Activated naive CD4-positive, alpha-beta T cell treated with anti-CD3 and anti-CD28 coated beads for 36 hours (primary cell): ENCODE measurements at regions of chr2 and their contacts with region 1.

Region 1: DNA sequence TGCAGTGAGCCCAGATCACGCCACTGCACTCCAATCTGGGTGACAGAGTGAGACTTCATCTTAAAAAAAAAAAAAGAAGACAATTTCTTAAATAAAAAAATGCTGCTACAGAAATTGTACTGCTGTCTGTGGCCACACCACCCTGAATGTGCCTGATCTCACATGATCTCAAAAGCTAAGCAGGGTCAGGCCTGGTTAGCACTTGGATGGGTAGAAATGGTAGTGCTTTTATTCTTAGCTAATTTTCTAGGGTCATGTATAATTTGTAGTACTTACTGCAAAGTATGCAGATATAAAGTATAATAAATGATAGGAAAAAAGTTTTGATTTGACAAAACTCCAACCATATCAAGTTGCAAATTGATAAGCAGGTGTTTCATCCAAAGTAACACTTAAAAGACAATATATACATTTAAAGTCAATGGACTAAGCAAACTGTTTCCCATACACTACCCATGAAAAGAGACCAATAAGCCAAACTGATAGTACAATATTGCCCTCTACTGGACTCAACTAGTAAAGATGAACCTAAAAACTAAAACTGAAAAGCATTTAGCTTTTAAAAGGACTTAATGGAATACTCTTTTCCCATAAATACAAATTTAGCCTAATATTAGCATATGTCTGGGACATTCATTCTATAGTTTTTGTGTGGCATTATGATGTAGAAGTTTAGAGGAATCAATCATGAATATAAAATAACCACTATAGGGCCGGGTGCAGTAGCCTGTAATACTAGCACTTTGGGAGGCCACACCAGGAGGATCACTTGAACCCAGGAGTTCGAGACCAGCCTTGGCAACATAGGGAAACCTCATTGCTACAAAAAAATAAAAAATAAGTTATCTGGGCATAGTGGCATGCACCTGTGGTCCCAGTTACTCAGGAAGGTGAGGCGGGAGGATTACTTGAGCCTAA is 18.6 kb upstream of the PEX13 start:
- DNase-seq: no peak
- H3K4me3 Mint-ChIP-seq: no peak overlapping the region
- H3K27ac Mint-ChIP-seq: no peak overlapping the region
- H3K4me1 Mint-ChIP-seq: no peaks in the 10 kb centered on the region
- H3K27me3 Mint-ChIP-seq: no peaks in the 10 kb centered on the region

Region 2: DNA sequence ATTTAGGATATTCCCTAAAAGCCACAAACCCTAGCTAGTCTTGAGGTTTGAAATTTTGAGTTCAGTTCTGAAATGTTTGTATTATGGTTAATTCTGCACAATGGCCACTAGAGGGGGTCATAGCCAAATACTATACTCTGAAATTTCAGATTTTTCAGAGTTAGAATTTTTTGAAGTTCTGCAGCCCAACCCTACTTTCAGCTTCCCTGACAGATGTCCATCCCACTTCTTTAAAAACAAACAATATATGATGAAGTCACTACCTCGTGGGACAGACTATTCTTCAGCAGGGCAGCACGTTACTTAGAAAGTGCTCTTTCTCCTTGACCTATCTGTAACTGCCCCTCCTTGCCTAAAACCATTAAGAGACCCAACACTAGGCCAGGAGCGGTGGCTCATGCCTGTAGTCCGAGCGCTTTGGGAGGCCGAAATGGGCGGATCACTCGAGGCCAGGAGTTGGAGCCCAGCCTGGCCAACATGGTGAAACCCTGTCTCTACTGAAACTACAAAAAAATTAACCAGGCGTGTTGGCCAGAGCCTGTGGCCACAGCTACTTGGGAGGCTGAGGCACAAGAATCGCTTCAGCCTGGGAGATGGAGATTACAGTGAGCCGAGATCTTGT is 291.0 kb before region 1 on chr2:
- CTCF ChIA-PET with region 1: interaction called, 128 read pairs
- intact Hi-C with region 1: loop called (anchors 1 kb)
- DNase-seq: no peak
- H3K4me3 Mint-ChIP-seq: no peak overlapping the region
- H3K27ac Mint-ChIP-seq: no peak overlapping the region
- H3K4me1 Mint-ChIP-seq: no peaks in the 10 kb centered on the region
- H3K27me3 Mint-ChIP-seq: no peaks in the 10 kb centered on the region

Region 3: DNA sequence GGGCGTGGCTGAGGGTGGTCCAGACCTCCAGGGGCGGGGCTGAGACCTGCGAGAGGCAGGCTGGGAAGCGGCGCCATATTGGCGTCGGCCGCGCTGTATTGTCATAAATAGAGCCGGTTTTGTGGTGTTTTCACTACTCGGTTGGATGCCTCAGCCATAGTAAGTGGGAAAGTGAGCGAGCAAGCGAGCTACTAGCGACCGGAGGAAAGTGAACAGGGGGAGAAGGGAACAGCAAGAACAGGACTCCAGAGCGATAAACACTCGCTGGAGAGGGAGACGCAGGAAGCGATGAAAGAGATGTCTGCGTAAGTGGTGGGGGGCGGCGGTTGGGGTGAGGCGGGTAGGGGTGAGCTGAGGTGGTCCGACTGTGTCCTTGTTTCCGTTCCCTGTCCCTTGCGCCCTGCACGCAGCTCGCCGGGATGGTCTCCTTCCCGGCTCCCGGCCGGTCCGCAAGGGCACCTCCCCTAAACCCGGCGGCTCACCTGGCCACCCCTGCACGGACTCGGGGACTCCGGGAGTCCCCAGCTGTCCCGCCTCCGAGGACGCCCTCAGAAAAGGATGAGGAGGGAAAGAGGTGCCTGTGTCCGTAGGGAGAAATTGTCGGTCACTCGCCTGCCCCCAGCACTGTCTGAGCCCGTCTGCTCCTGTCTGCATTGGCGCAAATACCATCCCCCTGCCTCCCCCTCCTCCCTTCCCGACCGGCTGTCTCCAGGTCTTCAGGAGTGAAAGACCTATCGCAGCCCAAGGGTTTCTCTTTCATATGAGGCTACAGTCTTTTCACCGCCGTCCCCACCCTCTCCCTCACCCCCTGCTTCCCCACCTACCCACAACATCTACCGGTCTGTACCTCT is 242.5 kb before region 1 on chr2 and contains the start of gene PAPOLG:
- CTCF ChIA-PET with region 1: interaction called, 3 read pairs
- intact Hi-C with region 1: loop called (anchors 1 kb)
- DNase-seq: peak; percentile 99
- H3K4me3 Mint-ChIP-seq: peak within 1 kb of the TSS; percentile 99
- H3K27ac Mint-ChIP-seq: peak within 1 kb of the TSS; percentile 97
- H3K4me1 Mint-ChIP-seq: peaks cover 40% of the 10 kb centered on the region
- H3K27me3 Mint-ChIP-seq: no peaks in the 10 kb centered on the region
- total RNA-seq, gene PAPOLG: 14.1 to 16.1 TPM

Region 4: DNA sequence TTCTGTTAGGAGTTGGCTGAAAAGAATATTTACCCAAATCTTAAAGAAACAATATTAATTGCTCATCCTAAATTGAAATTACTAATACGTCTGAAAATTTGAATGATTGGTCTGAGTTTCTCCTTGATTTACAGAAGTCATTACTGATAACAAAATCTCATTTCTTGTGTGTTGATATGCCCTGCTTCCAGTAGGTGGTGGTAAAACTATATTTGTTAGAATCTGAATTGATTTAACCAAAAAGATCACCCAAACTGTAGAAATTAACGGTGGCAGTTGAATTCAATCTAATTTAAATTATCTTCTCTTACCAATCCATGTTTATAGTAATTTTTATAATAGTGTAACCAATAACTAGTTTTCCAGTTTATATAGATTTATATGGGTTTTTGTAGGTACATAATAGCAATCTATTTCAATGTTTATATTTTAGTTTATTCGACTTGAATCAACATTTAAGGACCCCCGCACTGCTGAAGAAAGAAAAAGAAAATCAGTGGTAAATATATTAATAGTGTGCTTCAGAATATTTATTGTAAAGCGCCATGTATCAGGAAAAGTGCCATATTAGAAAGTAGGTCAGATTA is 204.5 kb before region 1 on chr2:
- CTCF ChIA-PET with region 1: interaction called, 128 read pairs
- intact Hi-C with region 1: loop called (anchors 1 kb)
- DNase-seq: no peak
- H3K4me3 Mint-ChIP-seq: no peak overlapping the region
- H3K27ac Mint-ChIP-seq: no peak overlapping the region
- H3K4me1 Mint-ChIP-seq: peaks cover 20% of the 10 kb centered on the region
- H3K27me3 Mint-ChIP-seq: no peaks in the 10 kb centered on the region

Region 5: DNA sequence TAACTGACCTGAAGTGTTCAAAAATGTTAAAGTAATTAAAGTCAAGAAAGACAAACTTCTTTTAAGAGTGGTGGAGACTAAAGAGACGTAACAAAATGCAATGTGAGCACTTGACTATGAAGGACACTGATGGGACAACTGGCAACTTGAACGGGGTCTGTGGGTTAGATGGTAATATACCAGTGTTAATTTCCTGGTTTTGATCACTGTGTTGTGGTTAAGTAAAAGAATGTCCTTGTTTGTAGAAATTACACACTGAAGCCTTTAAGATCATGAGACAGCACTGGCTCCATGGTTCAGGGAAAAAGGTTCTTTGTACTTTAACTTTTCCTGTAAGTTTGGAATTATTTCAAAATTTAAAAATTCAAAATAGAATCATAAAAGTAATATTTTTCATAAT is 59.3 kb before region 1 on chr2:
- CTCF ChIA-PET with region 1: interaction called, 11 read pairs
- intact Hi-C with region 1: no loop called
- DNase-seq: no peak
- H3K4me3 Mint-ChIP-seq: no peak overlapping the region
- H3K27ac Mint-ChIP-seq: no peak overlapping the region
- H3K4me1 Mint-ChIP-seq: peaks cover 8% of the 10 kb centered on the region
- H3K27me3 Mint-ChIP-seq: no peaks in the 10 kb centered on the region

Region 6: DNA sequence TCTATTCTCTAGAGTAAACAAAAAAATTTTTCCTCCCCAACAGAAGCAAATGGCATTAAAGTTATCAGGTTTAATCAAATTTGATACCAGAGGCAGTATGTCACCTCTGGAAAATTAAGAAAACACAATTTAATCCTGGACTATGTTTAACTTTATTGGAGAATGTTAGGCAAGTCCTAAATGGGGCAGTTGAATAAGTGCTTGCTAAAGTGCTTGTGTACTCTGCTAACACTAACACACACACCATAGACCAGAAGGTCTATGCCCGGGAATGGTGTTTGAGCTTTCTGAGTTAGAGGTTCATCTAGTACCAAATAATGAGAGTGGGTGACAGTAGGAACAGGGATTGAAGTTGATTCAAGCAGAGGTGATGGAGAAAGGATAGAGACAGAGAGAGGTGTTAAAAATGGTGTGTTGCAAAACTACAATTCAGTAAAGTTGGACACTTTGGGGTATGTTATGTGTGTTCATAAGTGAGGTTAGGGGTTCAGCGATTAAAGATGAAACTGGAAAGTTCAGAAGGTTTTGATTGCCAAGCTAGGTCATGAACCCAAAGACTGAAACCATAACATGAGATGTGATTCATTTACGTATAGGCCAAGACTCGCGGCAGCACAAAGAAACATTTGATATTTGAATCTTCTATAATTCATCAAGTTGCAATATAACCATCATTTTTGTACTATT is 21.9 kb before region 1 on chr2:
- CTCF ChIA-PET with region 1: interaction called, 9 read pairs
- intact Hi-C with region 1: loop called (anchors 2 kb)
- DNase-seq: peak; percentile 48
- H3K4me3 Mint-ChIP-seq: no peak overlapping the region
- H3K27ac Mint-ChIP-seq: peak overlapping the region; percentile 69
- H3K4me1 Mint-ChIP-seq: peaks cover 53% of the 10 kb centered on the region
- H3K27me3 Mint-ChIP-seq: no peaks in the 10 kb centered on the region

Region 7: DNA sequence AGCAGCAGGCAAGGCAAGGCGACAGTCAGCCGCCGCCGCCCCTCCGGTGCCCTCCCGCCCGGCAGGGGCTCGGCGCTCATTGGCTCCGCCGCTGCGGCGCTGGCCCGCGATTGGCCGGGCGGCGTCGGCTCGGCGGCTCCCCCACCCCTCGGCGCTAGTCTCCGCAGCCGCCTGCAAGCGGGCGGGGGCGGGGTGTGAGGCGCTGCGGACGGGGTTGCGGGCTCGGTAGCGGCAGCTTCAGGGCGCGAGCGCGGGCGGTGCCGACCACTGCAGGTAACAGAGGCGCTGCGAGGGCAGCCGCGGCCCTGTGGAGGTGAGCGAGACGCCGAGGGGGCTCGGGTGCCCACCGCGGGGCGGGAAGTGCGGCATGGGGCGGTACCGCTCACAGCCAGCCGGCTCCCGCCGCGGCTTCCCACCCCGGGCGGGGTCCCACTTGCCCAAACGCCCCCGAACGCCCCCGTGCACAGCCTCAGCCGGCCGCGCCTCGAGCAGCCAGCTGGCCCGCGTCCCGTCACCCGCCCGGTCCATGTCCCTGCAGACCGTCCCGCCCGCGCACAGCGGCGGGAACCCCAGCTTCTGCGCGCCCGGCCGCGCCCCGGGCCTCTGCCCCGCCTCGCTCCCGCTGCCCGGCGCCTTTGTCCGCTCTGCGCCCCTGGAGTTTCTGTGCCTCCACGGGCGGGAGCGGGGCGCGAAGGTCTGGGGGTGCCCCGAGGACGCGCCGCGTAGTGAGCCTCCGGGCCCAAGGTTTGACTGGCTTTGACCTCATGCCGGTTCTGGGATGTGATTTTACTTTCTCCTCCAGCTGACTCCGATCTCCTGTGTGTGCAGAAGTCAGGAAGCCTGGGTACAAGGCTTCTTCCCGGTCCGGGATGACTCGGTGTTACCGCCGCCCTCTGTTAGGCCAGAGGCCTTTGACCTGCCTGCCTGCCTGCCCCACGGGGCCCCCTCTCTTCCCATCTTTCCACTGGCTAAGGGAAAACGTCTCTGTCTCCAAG is 67.1 kb after region 1 on chr2 and contains the start of gene SANBR:
- CTCF ChIA-PET with region 1: no interaction called
- intact Hi-C with region 1: no loop called
- DNase-seq: peak; percentile 83
- H3K4me3 Mint-ChIP-seq: peak within 1 kb of the TSS; percentile 84
- H3K27ac Mint-ChIP-seq: no peak within 1 kb of the TSS
- H3K4me1 Mint-ChIP-seq: peaks cover 8% of the 10 kb centered on the region
- H3K27me3 Mint-ChIP-seq: no peaks in the 10 kb centered on the region
- total RNA-seq, gene SANBR: 1.9 to 2.1 TPM